Head of caudate nucleus (tissue), 42 donors: ENCODE measurements at regions of chr11 and their contacts with region 1.

Region 1: GRCh38 chr11:120511116-120511819 is at the start of gene GRIK4:
- DNase-seq: peak; percentile 81 to 97 (median 92)

Region 2: DNA sequence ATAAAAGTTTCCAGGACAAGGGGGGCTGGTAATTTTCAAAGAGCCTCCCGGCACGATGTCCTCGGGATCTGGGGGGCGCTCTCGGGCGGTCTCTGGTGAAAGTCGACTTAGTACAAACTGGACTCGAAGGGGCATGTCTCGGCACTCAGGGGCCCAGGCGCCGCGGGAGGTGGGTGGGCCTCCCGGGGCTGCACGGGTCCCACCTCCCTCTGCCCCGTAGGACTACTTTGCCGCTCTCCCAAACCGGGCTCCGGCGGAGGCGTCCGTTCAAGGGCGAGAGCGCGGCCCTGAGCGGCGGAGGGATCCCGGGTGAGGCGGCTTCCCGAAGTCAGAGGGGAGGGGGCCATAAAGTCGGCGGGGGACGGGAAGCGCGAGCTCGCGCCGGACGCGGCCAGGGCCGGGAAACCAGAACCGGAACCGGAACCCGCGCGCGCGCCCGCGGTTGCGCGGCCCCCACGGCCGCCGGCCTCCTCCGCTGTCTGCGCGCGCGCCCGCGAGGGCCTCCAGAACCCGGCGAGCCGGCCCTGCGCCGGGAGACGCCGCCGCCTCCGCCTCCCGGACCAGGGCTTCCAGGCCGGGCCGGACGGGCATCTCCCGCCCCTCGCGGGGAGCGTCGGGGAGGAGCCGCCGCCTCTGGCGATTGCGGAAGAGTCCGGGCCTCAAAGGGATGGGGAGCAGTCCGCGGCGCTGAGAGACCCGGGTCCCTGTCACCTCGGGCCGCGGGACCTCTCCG is 175.2 kb before region 1 on chr11 and contains the start of gene ARHGEF12:
- intact Hi-C with region 1: loop called (anchors 5 kb)
- DNase-seq: peak; percentile 74 to 97 (median 94)

Region 3: GRCh38 chr11:120547811-120548681 is 36.8 kb after region 1 on chr11:
- intact Hi-C with region 1: no loop called
- DNase-seq: peak; percentile 69 to 97 (median 88)

Region 4: DNA sequence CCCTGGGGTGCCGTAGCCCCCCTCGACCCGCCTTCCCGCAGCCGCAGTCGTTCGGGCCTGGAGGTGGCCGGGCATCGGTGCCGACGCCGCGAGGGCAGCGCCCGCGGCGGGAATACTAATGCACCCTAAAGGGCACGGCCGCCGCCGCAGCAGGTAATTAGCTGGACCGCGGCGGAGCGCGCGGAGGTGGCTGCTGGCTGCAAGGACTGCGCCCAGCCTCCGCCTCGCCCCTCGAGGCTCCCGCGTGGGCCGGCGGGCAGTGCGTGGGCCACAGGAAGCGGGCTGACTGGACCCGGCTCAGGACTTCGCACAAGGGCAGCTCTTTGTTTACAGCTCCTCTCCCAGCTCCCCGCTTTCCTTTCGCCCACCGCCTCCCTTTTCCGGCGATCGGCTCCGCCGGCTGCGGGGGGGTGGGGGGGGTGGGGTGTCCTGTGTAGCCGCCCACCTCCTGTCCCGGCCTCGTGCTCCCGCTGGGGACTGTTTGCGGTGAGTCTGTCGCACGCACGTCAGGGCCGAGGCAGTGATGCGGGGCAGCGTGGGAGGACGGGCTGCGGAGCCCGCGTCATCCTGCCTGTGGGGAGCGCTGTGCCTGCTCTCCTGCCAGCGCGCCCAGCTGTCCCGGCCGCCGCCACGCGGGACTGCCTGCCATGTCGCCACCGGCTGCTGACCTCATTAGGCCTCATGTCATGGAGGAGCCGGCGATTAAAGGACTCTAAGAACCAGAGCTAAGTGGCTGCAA is 53.5 kb after region 1 on chr11:
- intact Hi-C with region 1: loop called (anchors 5 kb)
- DNase-seq: peak; percentile 61 to 91 (median 80)

Region 5: DNA sequence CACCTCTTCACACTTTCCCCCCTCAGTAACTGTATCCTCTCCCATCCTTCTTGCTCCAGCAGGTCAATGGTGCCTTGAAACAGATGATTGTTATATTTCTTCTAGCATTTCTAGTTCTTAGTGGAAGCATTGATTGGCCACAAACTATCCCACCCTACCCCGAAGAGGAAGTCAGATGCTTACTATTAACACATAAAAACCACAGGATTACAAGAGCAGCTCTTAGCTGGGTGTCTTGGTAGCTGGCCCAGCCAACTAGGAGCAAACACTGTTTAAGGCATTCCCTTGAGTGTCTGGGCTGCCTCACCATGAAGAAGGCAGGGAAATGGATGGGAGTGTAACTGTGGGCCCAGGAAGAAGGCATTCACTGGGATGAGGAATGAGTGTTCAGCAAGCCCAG is 176.9 kb after region 1 on chr11:
- intact Hi-C with region 1: loop called (anchors 5 kb)
- DNase-seq: no peak

Region 6: DNA sequence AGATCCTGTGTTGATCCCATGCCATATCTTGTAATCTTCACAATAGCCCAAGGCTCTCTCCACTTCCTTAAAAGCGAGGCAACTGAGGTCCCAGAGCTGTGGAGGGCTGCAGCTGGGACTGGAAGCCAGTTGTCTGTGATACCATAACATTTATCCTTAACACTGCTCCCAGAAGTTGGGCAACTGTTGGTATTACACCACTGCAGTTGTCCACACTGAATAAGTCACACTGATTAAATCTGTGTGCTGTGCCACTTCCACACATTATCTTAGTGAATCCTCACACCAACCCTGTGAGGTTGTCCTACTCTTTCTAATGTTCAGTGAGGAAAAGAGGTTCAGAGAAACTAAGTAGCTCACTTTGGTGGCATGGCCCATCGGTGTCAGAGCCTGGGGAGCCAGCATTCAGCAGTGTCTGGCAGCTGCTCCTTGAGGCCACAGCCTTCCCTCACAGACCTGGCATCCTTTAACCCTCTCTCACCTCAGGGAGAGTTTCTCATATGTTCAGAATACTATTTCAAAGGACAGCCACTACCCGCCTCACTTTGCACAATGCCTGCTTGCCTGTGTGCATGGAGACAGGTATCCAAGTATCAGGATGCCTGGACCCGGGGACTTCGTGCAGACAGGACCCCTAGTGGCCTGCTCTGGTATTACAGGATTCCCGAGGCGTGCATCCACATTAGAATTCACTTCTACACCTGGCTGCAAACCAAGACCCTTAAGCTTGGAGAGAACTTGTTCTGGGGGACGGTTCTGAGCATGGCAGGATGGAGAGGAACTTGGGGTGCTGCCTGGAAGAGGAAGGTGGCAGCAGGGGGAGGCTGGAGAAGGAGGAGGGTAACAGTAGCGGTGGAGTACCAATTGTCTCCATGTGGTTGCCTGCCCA is 290.8 kb after region 1 on chr11:
- intact Hi-C with region 1: loop called (anchors 2 kb)
- DNase-seq: peak; percentile 62 to 92 (median 82)

Region 7: DNA sequence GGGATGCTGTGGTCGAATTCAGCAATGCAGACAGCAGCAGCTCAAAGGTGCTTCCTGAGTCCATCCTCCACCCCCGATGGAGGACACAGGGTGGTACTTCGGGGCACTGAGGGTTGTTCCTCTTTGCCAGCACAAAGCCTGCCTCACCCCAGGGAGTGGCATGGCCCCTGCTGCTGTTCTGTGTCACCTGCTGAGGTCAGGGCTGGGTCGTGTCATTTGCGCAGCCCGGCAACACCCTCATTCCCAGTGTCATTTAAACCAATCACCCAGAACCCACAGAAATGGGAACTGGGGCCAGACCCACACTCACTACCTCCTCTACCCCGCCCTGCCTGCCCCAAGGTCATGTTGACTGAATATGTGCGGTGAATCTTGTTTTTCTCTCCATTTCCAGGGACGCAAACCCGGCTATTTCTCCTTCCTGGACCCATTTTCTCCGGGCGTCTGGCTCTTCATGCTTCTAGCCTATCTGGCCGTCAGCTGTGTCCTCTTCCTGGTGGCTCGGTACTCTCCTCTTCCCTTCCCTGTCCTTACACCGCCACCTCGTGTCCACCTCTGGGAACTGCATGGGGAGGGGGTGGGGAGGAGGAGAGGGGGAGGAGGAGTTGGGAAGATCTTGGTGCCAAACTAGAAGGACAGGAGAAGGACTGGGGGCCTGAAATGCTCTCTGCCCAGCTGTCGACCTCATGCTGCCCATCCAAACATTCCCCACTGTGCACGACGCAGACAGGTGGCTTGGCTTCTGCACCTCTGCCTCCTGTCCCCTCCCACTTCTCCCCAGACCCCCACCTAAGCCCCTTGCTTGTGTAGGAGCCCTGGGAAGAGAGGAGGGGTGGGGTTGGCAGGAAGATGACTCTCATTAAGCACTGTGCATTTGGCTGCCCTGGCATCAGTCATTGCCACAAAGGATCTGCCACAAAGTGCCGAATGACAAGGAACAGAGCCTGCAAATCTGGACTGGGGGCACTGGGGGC is 441.5 kb after region 1 on chr11:
- intact Hi-C with region 1: loop called (anchors 5 kb)
- DNase-seq: peak; percentile 58 to 92 (median 84)

Region 8: GRCh38 chr11:120985718-120986569 is 474.7 kb after region 1 on chr11:
- intact Hi-C with region 1: no loop called
- DNase-seq: peak in 39 of 42 donors; percentile 8 to 64 (median 38)

Region 9: DNA sequence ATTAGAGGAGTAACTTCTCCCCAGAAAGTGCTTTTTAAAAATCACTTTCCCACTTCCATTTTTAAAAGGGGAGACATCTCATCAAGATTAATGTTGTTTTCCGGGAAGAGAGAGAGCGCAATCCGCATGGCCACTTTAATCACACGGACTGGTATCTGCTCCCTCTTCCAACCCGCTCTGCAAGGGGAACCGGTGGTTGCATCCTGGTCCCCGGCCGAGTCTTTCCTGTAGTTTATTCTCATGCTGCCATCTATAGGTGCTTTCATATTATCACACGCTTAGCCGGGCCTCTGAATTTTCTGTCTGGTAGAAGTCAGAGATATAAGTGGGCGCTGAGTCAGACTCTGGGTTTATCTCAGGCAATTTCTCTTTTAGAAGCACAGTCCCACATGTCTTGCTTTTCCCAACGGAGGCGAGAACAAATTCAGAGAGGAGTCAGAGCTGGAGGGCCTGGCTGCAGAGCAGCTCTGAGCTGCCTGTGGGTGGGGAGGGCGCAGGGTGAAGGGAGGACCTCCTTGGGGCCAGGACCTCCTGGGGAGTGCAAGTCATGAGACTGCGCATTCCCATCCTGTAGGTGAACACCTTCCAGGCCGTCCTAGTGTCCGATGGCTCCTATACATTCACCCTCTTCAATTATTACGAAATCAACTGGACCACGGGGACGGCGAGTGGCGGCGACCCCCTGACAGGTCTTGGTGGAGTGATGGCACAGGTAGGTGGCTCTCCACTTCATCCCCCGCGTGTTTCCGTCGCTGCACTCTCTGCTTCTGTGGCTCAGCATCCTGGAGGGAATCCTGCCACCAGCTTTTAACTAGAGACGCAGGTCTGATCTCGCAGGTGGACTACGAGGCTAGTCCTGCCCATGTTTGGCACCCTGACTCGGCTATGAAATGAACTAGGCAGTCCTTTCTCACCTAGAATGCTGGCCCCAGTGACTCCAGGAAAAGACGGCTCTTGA is 601.5 kb after region 1 on chr11:
- intact Hi-C with region 1: loop called (anchors 5 kb)
- DNase-seq: peak; percentile 57 to 93 (median 76)